Breast epithelium (tissue), 4 donors: ENCODE measurements at regions of chr4 and their contacts with region 1.

Region 1: DNA sequence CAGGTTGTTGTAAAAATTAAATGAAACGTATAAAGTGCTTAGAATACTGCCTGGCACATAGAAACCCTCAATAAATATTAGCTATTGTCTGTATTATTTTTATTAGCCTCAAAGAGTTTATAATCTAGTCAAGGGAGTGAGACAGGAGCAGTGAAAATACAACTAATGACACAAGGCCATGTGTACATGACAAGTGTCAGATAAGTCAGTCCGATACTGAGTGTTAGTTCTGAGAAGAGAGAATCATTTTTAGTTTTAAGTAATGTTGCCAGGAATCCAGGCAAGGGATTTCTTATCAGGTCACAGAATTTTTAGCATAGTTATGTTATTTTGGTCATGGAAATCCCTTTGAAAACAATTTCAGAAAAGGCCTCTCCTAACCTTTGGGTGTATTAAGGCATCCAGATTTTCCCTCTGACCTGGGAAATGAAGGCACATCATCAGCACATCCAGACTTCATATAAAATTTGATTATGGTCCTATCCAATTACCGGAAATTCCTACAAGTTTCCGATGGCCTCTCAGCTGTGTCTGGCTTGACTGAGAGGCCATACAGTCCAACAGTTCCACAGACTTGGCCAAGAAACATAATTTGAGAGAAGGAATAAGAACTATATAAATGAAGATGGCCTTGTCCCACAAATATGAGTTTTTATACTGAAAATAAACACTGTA is 35.7 kb downstream of the PPARGC1A start:
- DNase-seq: no peak
- H3K4me3 ChIP-seq: no peak overlapping the region
- H3K27ac ChIP-seq: no peak overlapping the region
- H3K4me1 ChIP-seq: no peaks in the 10 kb centered on the region
- H3K27me3 ChIP-seq: no peaks in the 10 kb centered on the region
- CTCF ChIP-seq: no peak
- POLR2A ChIP-seq: no peak

Region 2: GRCh38 chr4:23125118-23125517 is 729.0 kb before region 1 on chr4:
- intact Hi-C with region 1: loop called (anchors 5 kb)
- DNase-seq: no peak
- H3K4me3 ChIP-seq: no peak overlapping the region
- H3K27ac ChIP-seq: no peak overlapping the region
- H3K4me1 ChIP-seq: no peaks in the 10 kb centered on the region
- H3K27me3 ChIP-seq: no peaks in the 10 kb centered on the region
- CTCF ChIP-seq: no peak
- POLR2A ChIP-seq: no peak